ENCODE measurements at regions of chr22 and their contacts with region 1.

Region 1: GRCh38 chr22:27642104-27642800 is 159.3 kb downstream of the MN1 start:
- DNase-seq: no peak
- H3K4me3 ChIP-seq: no peak overlapping the region
- H3K27ac ChIP-seq: no peak overlapping the region
- H3K4me1 ChIP-seq: peaks cover 0 to 12% (median 9%) of the 10 kb centered on the region in 4 experiments
- H3K27me3 ChIP-seq: no peaks in the 10 kb centered on the region

Region 2: GRCh38 chr22:27627444-27627833 is 14.8 kb before region 1 on chr22:
- CTCF ChIA-PET with region 1: no interaction called
- POLR2A ChIA-PET with region 1: no interaction called
- DNase-seq: no peak
- H3K4me3 ChIP-seq: no peak overlapping the region
- H3K27ac ChIP-seq: no peak overlapping the region
- H3K4me1 ChIP-seq: peaks cover 0 to 4% (median 3%) of the 10 kb centered on the region in 4 experiments
- H3K27me3 ChIP-seq: no peaks in the 10 kb centered on the region

Region 3: GRCh38 chr22:27668828-27669797 is 26.9 kb after region 1 on chr22:
- CTCF ChIA-PET with region 1: interaction called, 10 read pairs
- POLR2A ChIA-PET with region 1: no interaction called
- DNase-seq: peak; percentile 97 to 100 (median 100)
- H3K4me3 ChIP-seq: peak overlapping the region in 3 of 7 experiments; percentile 6 to 11 (median 9)
- H3K27ac ChIP-seq: peak overlapping the region; percentile 35 to 80
- H3K4me1 ChIP-seq: peaks cover 6 to 65% (median 53%) of the 10 kb centered on the region in 4 experiments
- H3K27me3 ChIP-seq: no peaks in the 10 kb centered on the region